HepG2 (cell line): ENCODE measurements at regions of chr10 and their contacts with region 1.

Region 1: DNA sequence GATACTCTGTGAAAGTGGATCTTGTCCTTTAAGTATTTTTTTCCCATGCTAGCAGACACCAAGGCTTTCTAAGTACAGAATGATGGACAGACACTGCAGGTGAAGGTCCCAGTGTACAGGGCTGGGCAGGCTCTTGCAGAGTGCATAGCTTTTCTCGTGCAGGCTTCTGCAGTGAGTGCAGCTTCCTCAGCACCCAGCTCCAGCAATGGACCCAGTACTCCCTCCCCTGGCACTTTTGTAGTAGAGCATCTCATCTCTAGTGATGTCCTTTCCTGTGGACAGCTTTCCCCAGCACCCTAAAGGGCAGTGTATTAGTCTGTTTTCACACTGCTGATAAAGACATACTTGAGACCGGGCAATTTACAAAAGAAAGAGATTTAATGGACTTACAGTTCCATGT is 104.3 kb downstream of the CUL2 start:
- DNase-seq: peak; percentile 40
- ATAC-seq: peak; percentile 96
- H3K4me3 ChIP-seq: no peak overlapping the region
- H3K27ac ChIP-seq: no peak overlapping the region
- H3K4me1 ChIP-seq: no peaks in the 10 kb centered on the region
- H3K27me3 ChIP-seq: no peaks in the 10 kb centered on the region
- CTCF ChIP-seq: peak; percentile 69
- EP300 ChIP-seq: no peak
- POLR2A ChIP-seq: no peak
- RAD21 ChIP-seq: peak; percentile 63

Region 2: GRCh38 chr10:34655286-34656170 is 330.3 kb before region 1 on chr10:
- CTCF ChIA-PET with region 1: no interaction called
- POLR2A ChIA-PET with region 1: no interaction called
- in situ Hi-C with region 1: no loop called
- intact Hi-C with region 1: loop called (anchors 10 kb)
- DNase-seq: peak; percentile 63
- ATAC-seq: peak; percentile 33; the same call in 2 of the 3 replicates
- H3K4me3 ChIP-seq: no peak overlapping the region
- H3K27ac ChIP-seq: no peak overlapping the region
- H3K4me1 ChIP-seq: peaks cover 42% of the 10 kb centered on the region
- H3K27me3 ChIP-seq: no peaks in the 10 kb centered on the region
- CTCF ChIP-seq: peak; percentile 70
- EP300 ChIP-seq: no peak
- POLR2A ChIP-seq: no peak
- RAD21 ChIP-seq: peak; percentile 39; the same call in 1 of the 2 replicates

Region 3: DNA sequence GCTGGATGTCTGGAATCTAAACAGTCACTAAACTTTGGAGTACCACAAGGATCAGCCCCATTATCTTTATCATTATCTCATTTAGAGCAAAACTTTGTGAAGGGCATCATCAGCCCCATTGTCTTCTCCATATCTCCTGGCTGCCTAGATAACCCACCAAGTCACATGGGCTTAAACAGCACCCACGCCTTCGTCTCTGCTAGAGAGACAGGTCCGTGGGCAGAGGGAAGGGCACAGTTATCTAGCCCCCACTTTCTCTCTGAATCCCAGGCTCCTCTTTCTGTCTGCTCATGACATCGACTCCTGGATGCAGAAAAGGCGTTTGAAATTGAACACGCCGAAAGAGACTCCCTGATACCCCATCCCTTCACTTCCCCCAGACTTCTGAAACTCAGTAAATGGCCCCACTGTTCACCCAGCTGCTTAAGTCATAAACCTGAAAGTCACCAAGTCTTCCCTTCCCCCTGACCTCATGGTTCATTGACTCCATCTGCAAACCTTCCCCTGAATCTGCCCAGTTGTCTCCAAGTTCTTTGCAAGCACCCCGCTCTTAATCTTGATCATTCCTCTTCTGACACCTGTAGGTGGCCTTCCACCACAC is 149.8 kb before region 1 on chr10:
- CTCF ChIA-PET with region 1: no interaction called
- POLR2A ChIA-PET with region 1: no interaction called
- in situ Hi-C with region 1: no loop called
- intact Hi-C with region 1: loop called (anchors 10 kb)
- DNase-seq: no peak
- ATAC-seq: no peak
- H3K4me3 ChIP-seq: no peak overlapping the region
- H3K27ac ChIP-seq: no peak overlapping the region
- H3K4me1 ChIP-seq: peaks cover 19% of the 10 kb centered on the region
- H3K27me3 ChIP-seq: no peaks in the 10 kb centered on the region; a peak in 3 of 5 replicates
- CTCF ChIP-seq: no peak
- EP300 ChIP-seq: no peak
- POLR2A ChIP-seq: no peak
- RAD21 ChIP-seq: no peak

Region 4: GRCh38 chr10:35005868-35006267 is 20.0 kb after region 1 on chr10:
- CTCF ChIA-PET with region 1: no interaction called
- POLR2A ChIA-PET with region 1: no interaction called
- in situ Hi-C with region 1: no loop called
- intact Hi-C with region 1: no loop called
- DNase-seq: no peak
- ATAC-seq: no peak
- H3K4me3 ChIP-seq: no peak overlapping the region
- H3K27ac ChIP-seq: no peak overlapping the region
- H3K4me1 ChIP-seq: 0 out of 2 replicates have a peak, but pooled peaks cover under 1% of the 10 kb centered on the region
- H3K27me3 ChIP-seq: no peaks in the 10 kb centered on the region
- CTCF ChIP-seq: no peak
- EP300 ChIP-seq: no peak
- POLR2A ChIP-seq: no peak
- RAD21 ChIP-seq: no peak

Region 5: DNA sequence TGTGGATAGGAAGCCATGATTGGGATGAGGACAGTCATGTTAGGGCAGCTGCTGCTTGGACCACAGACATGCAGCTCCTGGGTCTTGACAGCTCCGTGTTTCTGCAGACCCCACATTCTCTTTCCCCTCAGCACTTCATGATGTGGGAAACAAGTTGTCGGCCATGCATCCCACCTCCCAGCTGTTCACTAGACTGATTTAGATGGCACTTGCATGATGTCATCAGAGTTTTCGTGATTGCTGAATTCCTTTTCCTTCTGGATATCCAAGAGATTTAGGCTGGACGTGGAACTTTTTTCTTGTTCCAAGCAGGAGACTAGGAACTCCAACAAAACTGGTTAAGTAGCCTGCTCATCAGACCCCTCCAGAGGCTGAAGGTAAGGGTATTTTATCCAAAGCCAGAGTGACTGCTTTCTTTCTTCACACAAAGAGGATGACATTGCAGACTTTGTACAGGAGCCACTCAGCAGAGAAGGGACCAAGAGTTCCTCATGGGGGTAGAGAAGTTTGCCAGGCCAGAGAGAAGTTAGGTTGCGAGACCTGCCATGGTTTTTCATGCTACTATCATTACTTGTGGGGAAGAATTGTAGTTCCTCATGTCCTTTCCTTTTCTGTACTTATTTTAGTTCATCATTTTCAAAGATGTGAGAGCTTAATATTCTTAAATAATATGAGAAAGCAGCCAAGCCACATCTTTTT is 501.7 kb after region 1 on chr10:
- CTCF ChIA-PET with region 1: no interaction called
- POLR2A ChIA-PET with region 1: no interaction called
- in situ Hi-C with region 1: no loop called
- intact Hi-C with region 1: no loop called
- DNase-seq: no peak
- ATAC-seq: no peak
- H3K4me3 ChIP-seq: no peak overlapping the region
- H3K27ac ChIP-seq: no peak overlapping the region
- H3K4me1 ChIP-seq: peaks cover 10% of the 10 kb centered on the region
- H3K27me3 ChIP-seq: no peaks in the 10 kb centered on the region
- CTCF ChIP-seq: no peak
- EP300 ChIP-seq: no peak
- POLR2A ChIP-seq: no peak
- RAD21 ChIP-seq: no peak